HepG2 (cell line): ENCODE measurements at regions of chr7 and their contacts with region 1.

Region 1: GRCh38 chr7:67659091-67659490 is 662.5 kb downstream of the TYW1 start:
- DNase-seq: no peak
- ATAC-seq: no peak
- H3K4me3 ChIP-seq: no peak overlapping the region
- H3K27ac ChIP-seq: no peak overlapping the region
- H3K4me1 ChIP-seq: no peaks in the 10 kb centered on the region
- H3K27me3 ChIP-seq: 0 out of 5 replicates have a peak, but pooled peaks cover 0 to 3% of the 10 kb centered on the region in 2 experiments
- CTCF ChIP-seq: no peak
- EP300 ChIP-seq: no peak
- POLR2A ChIP-seq: no peak
- RAD21 ChIP-seq: no peak

Region 2: GRCh38 chr7:67608806-67609205 is 50.3 kb before region 1 on chr7:
- CTCF ChIA-PET with region 1: no interaction called
- POLR2A ChIA-PET with region 1: no interaction called
- in situ Hi-C with region 1: no loop called
- intact Hi-C with region 1: loop called (anchors 2 kb)
- DNase-seq: no peak
- ATAC-seq: no peak
- H3K4me3 ChIP-seq: no peak overlapping the region
- H3K27ac ChIP-seq: no peak overlapping the region
- H3K4me1 ChIP-seq: no peaks in the 10 kb centered on the region
- H3K27me3 ChIP-seq: peaks cover 0 to 4% of the 10 kb centered on the region in 2 experiments; a peak in 2 of 5 replicates
- CTCF ChIP-seq: no peak
- EP300 ChIP-seq: no peak
- POLR2A ChIP-seq: no peak
- RAD21 ChIP-seq: no peak

Region 3: DNA sequence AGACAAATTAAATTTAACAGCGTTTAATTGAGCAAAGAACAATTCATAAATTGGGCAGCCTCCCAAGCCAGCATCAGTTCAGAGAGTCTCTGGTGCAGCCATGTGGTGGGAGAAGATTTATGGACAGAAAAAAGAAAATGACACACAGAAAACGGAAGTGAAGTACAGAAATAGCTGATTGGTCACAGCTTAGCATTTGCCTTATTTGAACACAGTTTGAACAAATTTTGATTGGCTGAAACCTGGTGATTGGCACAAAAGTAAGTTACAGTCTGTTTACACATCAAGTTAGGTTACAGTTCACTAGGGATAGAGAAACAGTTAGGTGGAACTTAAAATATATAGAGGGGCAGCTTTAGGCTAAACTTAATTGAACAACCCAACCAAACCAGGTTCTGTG is 57.6 kb after region 1 on chr7:
- CTCF ChIA-PET with region 1: no interaction called
- POLR2A ChIA-PET with region 1: no interaction called
- in situ Hi-C with region 1: no loop called
- intact Hi-C with region 1: no loop called
- DNase-seq: no peak
- ATAC-seq: no peak
- H3K4me3 ChIP-seq: no peak overlapping the region
- H3K27ac ChIP-seq: no peak overlapping the region
- H3K4me1 ChIP-seq: no peaks in the 10 kb centered on the region
- H3K27me3 ChIP-seq: no peaks in the 10 kb centered on the region
- CTCF ChIP-seq: no peak
- EP300 ChIP-seq: no peak
- POLR2A ChIP-seq: no peak
- RAD21 ChIP-seq: no peak